IMR-90 (cell line): ENCODE measurements at regions of chr11 and their contacts with region 1.

Region 1: GRCh38 chr11:35689081-35689996 is 26.8 kb downstream of the TRIM44 start:
- DNase-seq: no peak
- ATAC-seq: no peak
- H3K4me3 ChIP-seq: no peak overlapping the region
- H3K27ac ChIP-seq: no peak overlapping the region
- H3K4me1 ChIP-seq: no peaks in the 10 kb centered on the region
- H3K27me3 ChIP-seq: no peaks in the 10 kb centered on the region
- CTCF ChIP-seq: no peak
- POLR2A ChIP-seq: no peak
- RAD21 ChIP-seq: no peak

Region 2: GRCh38 chr11:35711173-35711910 is 22.0 kb after region 1 on chr11:
- CTCF ChIA-PET with region 1: no interaction called
- POLR2A ChIA-PET with region 1: interaction called, 15 read pairs
- dilution Hi-C with region 1: no loop called
- in situ Hi-C with region 1: no loop called
- intact Hi-C with region 1: no loop called
- DNase-seq: no peak
- ATAC-seq: no peak
- H3K4me3 ChIP-seq: no peak overlapping the region
- H3K27ac ChIP-seq: no peak overlapping the region
- H3K4me1 ChIP-seq: no peaks in the 10 kb centered on the region
- H3K27me3 ChIP-seq: no peaks in the 10 kb centered on the region
- CTCF ChIP-seq: 0 out of 2 replicates have a peak, but pooled peaks have one; percentile 10
- POLR2A ChIP-seq: no peak
- RAD21 ChIP-seq: peak; percentile 8; the same call in 1 of the 2 replicates